ENCODE measurements at regions of chr16 and their contacts with region 1.

Region 1: DNA sequence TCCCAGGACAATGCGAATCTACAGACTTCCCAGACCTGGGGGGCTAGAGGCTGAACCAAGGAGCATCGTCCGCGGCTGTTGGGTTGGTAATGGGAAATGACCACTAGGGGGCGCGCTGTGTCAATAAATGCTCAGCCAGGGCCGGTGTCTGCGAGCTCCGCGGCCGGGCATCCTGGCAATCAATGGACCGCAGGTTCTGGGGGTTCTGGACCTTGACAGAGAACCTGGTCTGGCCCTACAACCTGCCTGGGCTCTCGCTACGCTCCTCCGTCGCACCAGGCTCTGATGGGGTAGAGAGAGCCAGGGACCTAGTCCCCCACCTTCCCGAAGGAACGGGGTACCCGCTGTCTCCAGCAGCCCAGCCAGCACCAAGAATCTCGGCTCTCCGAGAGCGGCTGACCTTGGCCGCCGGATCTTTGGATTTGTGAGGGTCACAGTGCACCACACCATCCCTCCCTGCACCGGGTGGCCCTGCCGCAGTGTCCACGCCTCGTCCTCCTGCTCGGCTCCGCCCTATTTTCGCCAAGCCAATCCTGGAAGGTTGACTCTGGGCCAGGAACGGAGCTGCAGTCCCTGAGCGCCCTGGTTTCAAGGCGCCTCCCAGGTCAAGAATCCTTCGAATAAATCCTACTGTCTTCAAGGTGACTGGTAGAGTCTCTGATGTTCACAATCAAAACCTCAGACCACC is 20.4 kb upstream of the BEAN1 start:
- DNase-seq: peak; percentile 82 to 88 (median 86)
- ATAC-seq: peak; percentile 82 to 93 (median 90)
- H3K4me3 ChIP-seq: peak overlapping the region; percentile 32 to 56 (median 43)
- H3K27ac ChIP-seq: no peak overlapping the region
- H3K4me1 ChIP-seq: peaks cover 0 to 7% (median 3%) of the 10 kb centered on the region in 4 donors
- H3K27me3 ChIP-seq: no peaks in the 10 kb centered on the region
- CTCF ChIP-seq: peak; percentile 87 to 95 (median 90)
- POLR2A ChIP-seq: no peak

Region 2: GRCh38 chr16:66483689-66484481 is 77.2 kb after region 1 on chr16:
- intact Hi-C with region 1: loop called in 1 of 2 experiments (anchors 5 kb)
- DNase-seq: peak; percentile 79 to 83 (median 82)
- ATAC-seq: peak; percentile 79 to 84 (median 82)
- H3K4me3 ChIP-seq: no peak overlapping the region
- H3K27ac ChIP-seq: no peak overlapping the region
- H3K4me1 ChIP-seq: no peaks in the 10 kb centered on the region
- H3K27me3 ChIP-seq: no peaks in the 10 kb centered on the region
- CTCF ChIP-seq: peak; percentile 82 to 91 (median 90)
- POLR2A ChIP-seq: no peak

Region 3: GRCh38 chr16:66608241-66609138 is 201.8 kb after region 1 on chr16:
- intact Hi-C with region 1: loop called in 1 of 2 experiments (anchors 5 kb)
- DNase-seq: peak; percentile 88 to 90 (median 88)
- ATAC-seq: peak; percentile 84 to 85 (median 84)
- H3K4me3 ChIP-seq: no peak overlapping the region
- H3K27ac ChIP-seq: no peak overlapping the region
- H3K4me1 ChIP-seq: peaks cover 0 to 4% (median 2%) of the 10 kb centered on the region in 4 donors
- H3K27me3 ChIP-seq: no peaks in the 10 kb centered on the region
- CTCF ChIP-seq: peak; percentile 85 to 93 (median 91)
- POLR2A ChIP-seq: no peak

Region 4: DNA sequence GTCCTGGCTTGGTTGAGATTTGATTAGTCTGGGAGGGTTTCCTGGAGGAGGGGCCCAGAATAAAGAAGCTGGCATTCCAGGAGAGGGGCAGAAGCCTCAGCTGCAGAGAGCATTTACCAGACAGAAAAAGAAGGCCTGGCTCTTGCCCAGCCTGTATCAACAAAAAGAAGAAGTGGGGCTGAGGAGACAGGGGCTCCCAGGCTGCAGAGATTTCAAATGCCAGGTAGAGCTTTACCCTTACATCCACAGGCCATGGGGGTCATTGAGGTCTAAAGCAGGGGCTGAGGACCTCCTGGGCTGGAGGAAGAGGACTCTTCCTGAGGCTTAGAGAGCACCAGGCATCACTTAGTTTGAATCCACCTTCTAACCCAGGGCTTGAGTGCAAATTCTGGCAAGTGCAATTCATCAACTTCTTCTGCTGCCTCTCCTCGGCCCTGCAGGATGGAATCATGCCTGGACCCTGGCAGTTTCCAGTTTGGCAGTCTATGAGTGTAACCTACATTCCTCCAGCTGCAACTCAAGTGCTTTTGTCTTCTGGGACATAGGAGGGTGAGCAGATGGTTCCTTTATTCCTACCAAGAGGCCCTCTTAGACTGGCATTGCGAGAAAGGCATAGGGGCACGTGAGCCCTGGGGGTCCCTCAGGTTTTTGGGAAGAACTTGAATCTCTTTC is 452.9 kb after region 1 on chr16:
- intact Hi-C with region 1: loop called in 1 of 2 experiments (anchors 10 kb)
- DNase-seq: no peak
- ATAC-seq: no peak
- H3K4me3 ChIP-seq: no peak overlapping the region
- H3K27ac ChIP-seq: no peak overlapping the region
- H3K4me1 ChIP-seq: no peaks in the 10 kb centered on the region
- H3K27me3 ChIP-seq: no peaks in the 10 kb centered on the region
- CTCF ChIP-seq: no peak
- POLR2A ChIP-seq: no peak

Region 5: GRCh38 chr16:66872943-66873684 is 466.4 kb after region 1 on chr16:
- intact Hi-C with region 1: loop called (anchors 10 kb)
- DNase-seq: peak; percentile 90 to 93 (median 92)
- ATAC-seq: peak; percentile 95 to 98 (median 98)
- H3K4me3 ChIP-seq: peak overlapping the region in 2 of 3 donors; percentile 11 to 30
- H3K27ac ChIP-seq: peak overlapping the region in 1 of 3 donors; percentile 36
- H3K4me1 ChIP-seq: peaks cover 0 to 9% (median under 1%) of the 10 kb centered on the region in 4 donors
- H3K27me3 ChIP-seq: no peaks in the 10 kb centered on the region
- CTCF ChIP-seq: peak; percentile 84 to 98 (median 96)
- POLR2A ChIP-seq: no peak